ENCODE measurements at regions of chr2 and their contacts with region 1.

Region 1: DNA sequence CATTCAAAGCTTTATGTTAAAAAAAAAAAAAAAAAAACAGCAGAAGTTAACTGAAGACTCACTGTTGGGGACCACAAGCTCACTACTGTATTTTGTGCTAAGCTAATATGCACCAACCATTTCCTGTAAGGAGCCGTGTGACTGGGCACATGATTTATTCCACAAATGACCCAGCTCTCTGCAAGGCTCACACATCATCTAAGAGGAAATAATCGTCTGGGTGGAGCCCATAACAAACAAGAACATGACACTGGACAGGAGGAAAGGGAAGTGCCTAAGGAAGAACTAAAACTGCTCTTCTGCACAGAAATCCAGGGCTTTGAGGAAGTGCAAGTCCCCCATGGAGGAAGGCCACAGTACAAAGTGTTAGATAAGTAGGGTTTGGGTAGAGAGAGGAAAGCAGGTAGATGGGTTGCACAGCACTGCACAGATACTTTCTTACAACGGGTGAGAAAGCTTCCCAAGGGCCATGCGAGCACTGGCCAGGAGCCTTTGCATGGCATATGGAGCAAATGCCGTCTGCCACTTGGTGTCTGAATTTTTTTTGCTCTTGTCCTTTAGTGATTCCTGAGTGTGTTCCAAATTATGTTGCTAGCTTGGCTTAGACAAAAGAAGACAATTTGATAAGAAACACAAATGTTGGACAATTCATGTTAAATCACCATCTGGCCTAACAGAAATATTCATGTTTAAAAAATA is 24.4 kb downstream of the NFE2L2 start:
- DNase-seq: no peak
- H3K4me3 ChIP-seq: no peak overlapping the region
- CTCF ChIP-seq: no peak

Region 2: GRCh38 chr2:177254433-177255226 is 14.5 kb after region 1 on chr2:
- CTCF ChIA-PET with region 1: interaction called, 11 read pairs
- POLR2A ChIA-PET with region 1: no interaction called
- DNase-seq: no peak
- H3K4me3 ChIP-seq: no peak overlapping the region
- CTCF ChIP-seq: peak; percentile 33

Region 3: DNA sequence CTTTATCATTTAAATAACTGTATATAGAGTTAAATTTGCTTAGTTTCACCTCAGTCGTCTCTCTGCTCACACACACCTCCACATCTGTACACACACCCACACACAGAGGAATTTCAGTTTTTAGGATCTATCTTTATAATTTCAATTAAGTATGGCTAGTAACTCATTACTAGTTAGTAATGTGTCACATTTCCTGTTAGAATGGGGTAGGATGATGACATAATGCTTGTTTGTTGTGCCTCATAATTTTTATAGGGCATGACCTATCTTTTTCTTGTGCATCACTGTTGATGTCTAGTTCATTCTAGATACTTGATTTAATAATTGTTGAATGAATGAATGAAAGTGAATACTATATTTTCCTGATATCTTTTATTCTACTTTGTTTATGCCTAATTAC is 261.1 kb after region 1 on chr2:
- CTCF ChIA-PET with region 1: no interaction called
- POLR2A ChIA-PET with region 1: no interaction called
- DNase-seq: no peak
- H3K4me3 ChIP-seq: no peak overlapping the region
- CTCF ChIP-seq: no peak

Measured in AG04449 (cell line).